Naive thymus-derived CD4-positive, alpha-beta T cell (primary cell): ENCODE measurements at regions of chr11 and their contacts with region 1.

Region 1: DNA sequence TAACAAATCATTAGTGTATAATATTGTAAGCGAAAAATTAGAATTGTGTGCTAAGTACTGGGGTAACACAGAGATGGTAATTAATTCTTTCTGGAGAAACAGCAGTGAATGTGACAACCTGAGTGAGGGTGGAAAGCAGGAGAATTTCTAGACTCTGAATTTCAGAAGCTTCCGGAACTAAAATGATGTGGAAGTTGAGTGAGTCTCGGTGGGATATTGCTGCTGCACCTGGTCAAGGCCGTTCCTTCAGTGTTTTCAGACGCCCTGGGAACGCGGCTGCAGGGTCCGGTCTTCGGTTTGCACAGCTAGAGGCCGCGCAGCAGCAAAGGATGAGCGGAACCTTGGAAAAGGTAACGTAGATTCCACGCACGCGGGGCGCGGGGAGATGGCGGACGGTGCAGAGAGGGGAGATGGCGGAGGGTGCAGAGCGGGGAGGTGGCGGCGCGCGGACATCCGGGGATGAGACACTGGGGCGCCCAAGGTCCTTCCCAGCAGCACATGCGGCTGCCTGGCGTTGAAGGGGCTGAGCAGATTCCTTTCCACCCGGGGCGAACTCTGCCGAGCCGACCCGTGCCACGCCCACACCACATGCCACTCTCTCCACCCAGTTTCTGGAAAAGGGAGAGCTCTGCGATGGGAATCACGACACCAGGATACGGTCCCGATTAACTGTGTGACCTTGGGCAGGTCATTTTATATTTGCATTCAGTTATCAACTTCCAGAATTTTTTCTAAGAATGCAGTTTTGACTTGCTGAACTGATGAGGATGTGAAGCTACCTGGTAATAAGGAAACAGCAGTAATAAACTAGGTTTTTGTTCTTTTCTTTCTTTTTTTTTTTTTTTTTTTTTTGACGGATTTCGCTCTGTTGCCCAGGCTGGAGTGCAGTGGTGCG is at the start of gene MRPL48:
- DNase-seq: peak; percentile 74 to 90 (median 86)
- ATAC-seq: peak; percentile 100
- H3K4me3 ChIP-seq: peak within 1 kb of the TSS; percentile 94
- H3K4me3 Mint-ChIP-seq: peak within 1 kb of the TSS; percentile 92 to 100 (median 98)
- H3K27ac ChIP-seq: peak within 1 kb of the TSS; percentile 81
- H3K27ac Mint-ChIP-seq: peak within 1 kb of the TSS; percentile 93 to 100 (median 99)
- H3K4me1 ChIP-seq: peaks cover 10 to 13% of the 10 kb centered on the region in 2 donors
- H3K4me1 Mint-ChIP-seq: peaks cover 7 to 43% (median 30%) of the 10 kb centered on the region in 7 donors
- H3K27me3 ChIP-seq: no peaks in the 10 kb centered on the region
- H3K27me3 Mint-ChIP-seq: no peaks in the 10 kb centered on the region
- total RNA-seq, gene MRPL48: 20.3 to 50.6 (median 25.5) TPM

Region 2: DNA sequence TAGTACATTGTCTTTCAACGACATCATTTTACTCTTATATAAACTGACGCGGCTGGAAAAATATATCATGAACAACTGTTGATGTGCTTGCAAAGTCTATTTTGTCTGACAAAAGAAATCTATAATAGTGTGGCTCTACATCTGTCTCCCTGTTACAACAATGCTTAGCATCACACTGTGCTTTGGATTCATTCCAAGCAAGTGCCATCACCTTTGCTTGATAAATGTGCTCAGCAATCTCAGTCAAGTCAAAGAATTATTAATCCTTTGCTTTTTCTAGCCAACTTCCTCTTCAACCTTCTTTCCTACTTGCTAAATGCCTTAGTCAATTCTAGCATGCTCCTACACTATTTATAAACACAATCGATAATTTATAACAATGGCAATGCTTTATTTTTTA is 786.3 kb before region 1 on chr11:
- CTCF ChIA-PET with region 1: no interaction called
- POLR2A ChIA-PET with region 1: no interaction called
- intact Hi-C with region 1: no loop called
- DNase-seq: no peak
- ATAC-seq: no peak
- H3K4me3 ChIP-seq: no peak overlapping the region
- H3K4me3 Mint-ChIP-seq: no peak overlapping the region
- H3K27ac ChIP-seq: no peak overlapping the region
- H3K27ac Mint-ChIP-seq: no peak overlapping the region
- H3K4me1 ChIP-seq: no peaks in the 10 kb centered on the region
- H3K4me1 Mint-ChIP-seq: peaks cover 2 to 40% (median 22%) of the 10 kb centered on the region in 7 donors
- H3K27me3 ChIP-seq: no peaks in the 10 kb centered on the region
- H3K27me3 Mint-ChIP-seq: no peaks in the 10 kb centered on the region

Region 3: GRCh38 chr11:74592441-74593362 is 804.8 kb after region 1 on chr11 and contains the start of gene POLD3:
- CTCF ChIA-PET with region 1: no interaction called
- POLR2A ChIA-PET with region 1: no interaction called
- intact Hi-C with region 1: loop called in 1 of 2 experiments (anchors 5 kb)
- DNase-seq: peak; percentile 83 to 97 (median 94)
- ATAC-seq: peak; percentile 99
- H3K4me3 ChIP-seq: peak within 1 kb of the TSS; percentile 98
- H3K4me3 Mint-ChIP-seq: peak within 1 kb of the TSS; percentile 90 to 100 (median 92)
- H3K27ac ChIP-seq: peak within 1 kb of the TSS; percentile 96
- H3K27ac Mint-ChIP-seq: peak within 1 kb of the TSS; percentile 90 to 99 (median 95)
- H3K4me1 ChIP-seq: peaks cover 9% of the 10 kb centered on the region in 2 donors
- H3K4me1 Mint-ChIP-seq: peaks cover 7 to 33% (median 27%) of the 10 kb centered on the region in 7 donors
- H3K27me3 ChIP-seq: no peaks in the 10 kb centered on the region
- H3K27me3 Mint-ChIP-seq: peaks cover 0 to 5% (median 0%) of the 10 kb centered on the region in 5 donors
- total RNA-seq, gene POLD3: 8.0 to 40.8 (median 14.7) TPM